ENCODE measurements at regions of chr6 and their contacts with region 1.

Region 1: DNA sequence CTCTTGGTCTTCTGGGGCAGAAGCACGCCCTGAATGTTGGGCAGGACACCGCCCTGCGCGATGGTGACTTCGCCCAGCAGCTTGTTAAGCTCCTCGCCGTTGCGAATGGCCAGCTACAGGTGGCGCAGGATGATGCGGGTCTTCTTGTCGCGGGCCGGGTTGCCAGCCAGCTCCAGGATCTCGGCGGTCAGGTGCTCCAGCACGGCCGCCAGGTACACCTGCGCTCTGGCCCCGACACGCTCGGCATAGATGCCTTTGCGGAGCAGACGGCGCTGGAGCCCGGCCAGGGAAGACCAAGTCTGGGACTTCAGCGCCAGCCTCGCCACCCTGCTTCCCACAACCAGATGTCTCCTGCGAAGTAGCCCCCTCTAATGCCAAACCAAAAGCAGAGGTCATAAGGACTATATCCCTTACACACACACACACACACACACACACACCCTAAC is 8.0 kb upstream of the SLC17A3 start:
- DNase-seq: peak; percentile 89
- ATAC-seq: peak; percentile 99
- H3K4me3 Mint-ChIP-seq: peak overlapping the region; percentile 69
- H3K27ac Mint-ChIP-seq: peak overlapping the region; percentile 82; the same call in 1 of the 2 replicates
- H3K4me1 Mint-ChIP-seq: peaks cover 2% of the 10 kb centered on the region
- H3K27me3 Mint-ChIP-seq: peaks cover 2% of the 10 kb centered on the region
- CTCF ChIP-seq: no peak

Region 2: GRCh38 chr6:25788305-25788922 is 93.7 kb before region 1 on chr6:
- CTCF ChIA-PET with region 1: interaction called, 16 read pairs
- POLR2A ChIA-PET with region 1: no interaction called
- DNase-seq: peak; percentile 78
- ATAC-seq: peak; percentile 96
- H3K4me3 Mint-ChIP-seq: no peak overlapping the region
- H3K27ac Mint-ChIP-seq: no peak overlapping the region
- H3K4me1 Mint-ChIP-seq: no peaks in the 10 kb centered on the region
- H3K27me3 Mint-ChIP-seq: no peaks in the 10 kb centered on the region
- CTCF ChIP-seq: peak; percentile 56; the same call in 1 of the 2 replicates

Region 3: DNA sequence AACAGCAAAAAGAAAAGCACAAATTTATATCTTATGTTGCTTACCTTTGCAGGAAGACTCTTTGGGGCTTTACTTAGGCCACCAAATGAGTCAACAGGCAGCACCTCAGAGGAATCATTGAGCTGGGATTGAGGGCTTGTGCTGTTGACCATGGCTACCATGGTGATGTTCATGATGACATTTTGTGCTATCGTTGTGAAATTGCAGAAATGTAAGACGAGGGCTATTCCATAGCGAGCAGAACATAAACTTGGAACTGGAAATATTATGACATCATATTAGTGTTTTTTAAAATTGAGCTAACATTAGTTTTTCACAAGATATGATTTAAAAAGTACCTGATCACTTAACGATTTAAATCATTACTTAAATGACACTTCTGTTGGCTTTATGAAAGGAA is 19.9 kb before region 1 on chr6:
- CTCF ChIA-PET with region 1: interaction called, 10 read pairs
- POLR2A ChIA-PET with region 1: no interaction called
- DNase-seq: no peak
- ATAC-seq: no peak
- H3K4me3 Mint-ChIP-seq: no peak overlapping the region
- H3K27ac Mint-ChIP-seq: no peak overlapping the region
- H3K4me1 Mint-ChIP-seq: no peaks in the 10 kb centered on the region
- H3K27me3 Mint-ChIP-seq: peaks cover 2% of the 10 kb centered on the region; the same call in 1 of the 2 replicates
- CTCF ChIP-seq: no peak

Region 4: GRCh38 chr6:25899123-25899522 is 17.0 kb after region 1 on chr6:
- CTCF ChIA-PET with region 1: interaction called, 10 read pairs
- POLR2A ChIA-PET with region 1: no interaction called
- DNase-seq: no peak
- ATAC-seq: peak; percentile 78
- H3K4me3 Mint-ChIP-seq: no peak overlapping the region
- H3K27ac Mint-ChIP-seq: no peak overlapping the region
- H3K4me1 Mint-ChIP-seq: peaks cover 22% of the 10 kb centered on the region
- H3K27me3 Mint-ChIP-seq: no peaks in the 10 kb centered on the region; the same call in 1 of the 2 replicates
- CTCF ChIP-seq: no peak

Region 5: DNA sequence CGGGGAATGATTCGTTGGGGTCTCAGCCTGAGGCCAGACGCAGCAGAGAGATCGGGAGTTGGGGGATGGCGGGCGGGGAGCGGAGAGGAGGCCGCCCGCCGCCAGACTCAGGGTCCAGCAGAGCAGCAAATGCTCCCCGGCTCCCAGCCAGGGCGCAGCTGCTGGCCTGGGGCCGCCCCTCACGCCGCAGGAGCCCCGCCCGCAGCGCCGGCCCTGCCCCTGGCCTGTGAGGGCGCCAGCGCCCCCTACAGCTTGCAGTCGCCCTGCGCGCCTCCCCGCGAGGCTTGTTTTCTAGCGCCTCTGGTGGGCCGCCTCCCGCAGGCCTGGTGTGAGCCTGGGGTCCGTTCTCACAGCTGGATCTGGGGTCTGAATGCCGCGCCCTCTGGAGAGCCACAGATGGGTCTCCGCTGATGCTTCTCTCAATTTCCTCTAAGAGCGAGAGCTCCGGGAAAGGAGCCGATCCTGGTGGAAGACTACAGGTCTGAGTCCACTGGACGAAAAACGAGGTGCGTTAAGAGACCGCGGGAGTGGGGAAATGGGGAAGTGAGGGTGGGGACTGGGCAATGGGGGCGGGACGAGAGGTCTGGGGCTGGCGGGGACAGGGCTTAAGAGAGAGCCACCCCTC is 110.5 kb after region 1 on chr6:
- CTCF ChIA-PET with region 1: interaction called, 17 read pairs
- POLR2A ChIA-PET with region 1: no interaction called
- DNase-seq: peak; percentile 95
- ATAC-seq: peak; percentile 89
- H3K4me3 Mint-ChIP-seq: peak overlapping the region; percentile 96
- H3K27ac Mint-ChIP-seq: peak overlapping the region; percentile 89
- H3K4me1 Mint-ChIP-seq: peaks cover 33% of the 10 kb centered on the region
- H3K27me3 Mint-ChIP-seq: no peaks in the 10 kb centered on the region
- CTCF ChIP-seq: peak; percentile 91

Region 6: GRCh38 chr6:26025894-26026832 is 144.1 kb after region 1 on chr6:
- CTCF ChIA-PET with region 1: no interaction called
- POLR2A ChIA-PET with region 1: no interaction called
- DNase-seq: peak; percentile 95
- ATAC-seq: peak; percentile 12
- H3K4me3 Mint-ChIP-seq: peak overlapping the region; percentile 92
- H3K27ac Mint-ChIP-seq: peak overlapping the region; percentile 98
- H3K4me1 Mint-ChIP-seq: peaks cover 73% of the 10 kb centered on the region
- H3K27me3 Mint-ChIP-seq: no peaks in the 10 kb centered on the region
- CTCF ChIP-seq: peak; percentile 60

Measured in WTC11 (cell line).